Tibial artery (tissue), 4 donors: ENCODE measurements at regions of chr1 and their contacts with region 1.

Region 1: DNA sequence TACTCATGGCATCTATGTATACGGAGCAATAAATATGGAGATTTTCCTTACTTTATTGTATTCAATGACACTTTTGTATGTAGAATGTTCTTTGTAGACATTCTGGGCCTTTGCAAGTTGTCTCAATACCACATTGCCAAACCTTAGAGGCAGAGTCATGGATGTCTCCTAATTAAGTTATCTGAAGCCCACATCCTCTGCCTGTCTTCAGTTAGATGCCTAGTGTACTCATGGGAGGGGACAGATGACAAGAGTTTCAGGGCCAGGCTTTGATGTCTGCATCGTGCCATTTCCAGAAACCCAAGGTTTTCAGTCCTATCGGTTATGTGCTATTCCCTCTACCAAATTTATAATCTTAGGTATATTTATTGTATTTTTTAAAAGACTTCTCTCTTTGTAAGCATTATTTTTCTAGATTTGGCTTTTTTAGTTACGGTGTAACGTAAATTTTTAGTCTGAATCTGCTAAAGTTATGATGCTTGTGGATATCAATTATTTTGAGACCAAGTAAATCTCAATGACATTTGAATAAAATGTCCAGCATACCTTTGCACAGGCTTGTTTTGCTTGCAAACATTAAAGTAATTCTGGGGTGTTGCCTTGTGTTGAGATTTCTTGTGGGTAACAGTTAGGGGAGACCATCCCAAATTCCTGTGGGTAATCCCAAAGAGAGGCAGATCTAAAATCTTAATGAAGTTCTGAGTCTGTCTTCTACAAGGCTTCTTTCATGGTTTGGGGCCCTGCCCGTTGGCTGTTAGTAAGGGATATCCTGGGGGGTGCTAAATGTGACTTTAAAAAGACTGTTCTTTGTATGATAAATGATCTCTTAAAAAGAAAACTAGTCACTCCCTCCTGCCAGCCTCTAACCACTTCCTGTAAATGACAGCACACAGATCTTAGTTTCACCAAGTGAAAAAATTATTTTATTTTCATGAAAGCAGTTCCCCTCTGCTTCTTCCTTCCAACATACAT is 8.0 kb upstream of the MACF1 start:
- DNase-seq: no peak
- H3K4me3 ChIP-seq: no peak overlapping the region
- H3K27ac ChIP-seq: peak overlapping the region; percentile 79 to 83
- H3K4me1 ChIP-seq: peaks cover 9 to 60% (median 47%) of the 10 kb centered on the region in 4 donors
- H3K27me3 ChIP-seq: no peaks in the 10 kb centered on the region
- CTCF ChIP-seq: no peak

Region 2: GRCh38 chr1:39132505-39133339 is 63.8 kb before region 1 on chr1:
- intact Hi-C with region 1: loop called (anchors 10 kb)
- DNase-seq: peak; percentile 74 to 87
- H3K4me3 ChIP-seq: no peak overlapping the region
- H3K27ac ChIP-seq: peak overlapping the region; percentile 67 to 71
- H3K4me1 ChIP-seq: peaks cover 0 to 69% (median 48%) of the 10 kb centered on the region in 4 donors
- H3K27me3 ChIP-seq: no peaks in the 10 kb centered on the region
- CTCF ChIP-seq: peak; percentile 27 to 47

Region 3: DNA sequence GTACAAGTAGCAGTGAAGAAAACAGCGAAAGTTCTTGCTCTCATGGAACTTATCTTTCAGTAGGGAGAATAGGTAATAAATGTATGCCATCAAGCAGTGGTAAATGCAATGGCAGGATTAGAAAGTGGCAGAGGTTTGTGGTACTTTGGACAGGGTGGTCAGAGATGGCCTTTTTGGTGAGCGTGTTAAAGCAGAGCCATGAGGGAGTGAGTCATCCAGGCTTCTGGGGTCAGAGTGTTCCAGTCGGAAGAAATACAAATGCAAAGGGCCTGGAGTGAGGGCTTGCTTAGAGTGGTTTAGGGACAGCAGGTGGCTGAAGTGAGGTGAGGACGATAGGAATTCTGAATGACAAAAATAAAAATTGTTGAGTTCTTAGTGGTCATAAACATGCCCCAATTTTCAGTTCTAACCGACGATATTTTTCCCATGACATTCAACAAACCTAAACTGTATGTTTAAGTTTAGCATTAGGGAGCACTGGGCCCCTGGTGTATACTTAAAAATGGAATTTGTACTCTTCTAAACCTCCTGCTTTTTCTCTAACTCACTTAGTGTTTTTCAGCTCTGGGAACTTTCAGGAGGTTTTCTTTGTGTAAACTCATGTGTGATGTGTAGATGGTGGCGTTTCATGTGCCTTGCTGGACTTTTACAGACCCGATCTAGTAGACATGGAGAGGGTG is 86.1 kb after region 1 on chr1:
- intact Hi-C with region 1: no loop called
- DNase-seq: no peak
- H3K4me3 ChIP-seq: no peak overlapping the region
- H3K27ac ChIP-seq: peak overlapping the region; percentile 61
- H3K4me1 ChIP-seq: peaks cover 0 to 47% (median 23%) of the 10 kb centered on the region in 4 donors
- H3K27me3 ChIP-seq: no peaks in the 10 kb centered on the region
- CTCF ChIP-seq: no peak